G401 (cell line): ENCODE measurements at regions of chr10 and their contacts with region 1.

Region 1: GRCh38 chr10:92413519-92413918 is 122.6 kb downstream of the MARCHF5 start:
- DNase-seq: no peak

Region 2: DNA sequence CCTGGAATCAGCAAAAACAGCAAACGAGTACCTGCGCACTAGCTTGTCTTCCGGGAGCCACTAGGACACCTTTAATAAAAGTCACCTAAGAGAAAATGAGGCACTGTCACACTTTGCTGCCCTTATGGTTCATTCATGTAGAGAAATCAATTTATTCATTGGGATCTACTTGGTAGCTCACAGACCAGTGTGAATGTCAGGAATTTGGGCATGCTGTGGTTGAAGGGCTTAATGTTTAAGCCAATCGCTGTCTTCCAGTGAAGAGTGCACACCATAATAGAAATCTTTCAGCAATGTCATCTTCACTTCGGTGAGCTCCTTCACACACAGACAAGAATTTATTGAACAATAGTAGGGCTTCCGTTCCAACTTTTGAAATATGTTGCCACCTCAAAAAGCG is 57.5 kb before region 1 on chr10:
- in situ Hi-C with region 1: loop called (anchors 5 kb)
- DNase-seq: no peak